A673 (cell line): ENCODE measurements at regions of chr1 and their contacts with region 1.

Region 1: GRCh38 chr1:94926915-94927404 is at the start of gene CNN3:
- DNase-seq: peak; percentile 96
- H3K4me3 ChIP-seq: peak within 1 kb of the TSS; percentile 61
- H3K27ac ChIP-seq: peak within 1 kb of the TSS; percentile 86
- H3K4me1 ChIP-seq: peaks cover 51% of the 10 kb centered on the region
- H3K27me3 ChIP-seq: no peaks in the 10 kb centered on the region
- CTCF ChIP-seq: no peak
- total RNA-seq, gene CNN3: 233 and 260 TPM in 2 replicates

Region 2: GRCh38 chr1:94854458-94855306 is 72.3 kb before region 1 on chr1:
- CTCF ChIA-PET with region 1: interaction called, 3 read pairs
- POLR2A ChIA-PET with region 1: no interaction called
- intact Hi-C with region 1: loop called (anchors 2 kb)
- DNase-seq: peak; percentile 92
- H3K4me3 ChIP-seq: peak overlapping the region; percentile 44
- H3K27ac ChIP-seq: no peak overlapping the region
- H3K4me1 ChIP-seq: no peaks in the 10 kb centered on the region
- H3K27me3 ChIP-seq: no peaks in the 10 kb centered on the region
- CTCF ChIP-seq: peak; percentile 97

Region 3: DNA sequence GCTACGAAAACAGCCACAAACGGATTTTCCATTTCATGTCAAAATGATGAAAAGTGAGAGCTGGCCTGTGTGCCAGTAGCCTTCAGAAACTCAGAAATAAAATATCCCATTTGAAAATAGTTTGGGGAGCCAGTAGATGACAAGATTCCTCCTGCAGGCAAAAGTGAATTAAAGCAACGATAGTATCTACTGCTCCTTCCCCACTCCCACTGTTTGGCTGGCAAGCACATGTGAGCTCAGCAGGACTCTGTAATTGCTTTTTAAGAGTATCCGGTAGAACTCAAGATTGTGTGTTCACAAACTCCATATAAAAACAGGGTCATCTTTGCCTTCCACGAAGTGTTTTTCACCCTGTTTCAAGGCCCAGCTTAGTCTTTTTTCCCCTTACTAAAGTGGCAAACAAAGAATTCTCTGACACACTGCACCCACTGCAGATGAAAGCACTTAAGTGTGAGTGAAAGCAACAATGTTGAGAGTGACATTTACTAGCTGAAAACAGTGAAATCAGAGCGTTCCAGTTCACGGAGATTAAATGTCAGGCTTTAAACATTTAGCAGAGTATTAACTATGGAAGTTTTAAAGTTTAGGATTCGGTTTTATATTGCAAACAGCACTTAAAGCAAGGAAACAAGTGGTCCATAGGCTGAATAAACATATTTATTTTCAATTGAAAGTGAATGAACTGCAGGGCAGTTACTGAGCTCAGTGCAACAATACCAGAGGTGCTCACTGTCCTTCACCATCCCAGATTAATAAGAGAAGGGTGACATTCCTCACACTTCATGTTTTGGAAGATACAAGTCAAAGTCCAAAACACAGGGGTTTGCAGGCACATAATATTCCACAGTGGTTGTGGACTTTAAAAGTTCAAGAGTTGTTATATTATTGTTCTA is 75.8 kb after region 1 on chr1:
- CTCF ChIA-PET with region 1: no interaction called
- POLR2A ChIA-PET with region 1: no interaction called
- intact Hi-C with region 1: loop called (anchors 5 kb)
- DNase-seq: peak; percentile 94
- H3K4me3 ChIP-seq: peak overlapping the region; percentile 1
- H3K27ac ChIP-seq: peak overlapping the region; percentile 82
- H3K4me1 ChIP-seq: peaks cover 59% of the 10 kb centered on the region
- H3K27me3 ChIP-seq: no peaks in the 10 kb centered on the region
- CTCF ChIP-seq: no peak

Region 4: GRCh38 chr1:95023399-95024043 is 96.6 kb after region 1 on chr1:
- CTCF ChIA-PET with region 1: no interaction called
- POLR2A ChIA-PET with region 1: no interaction called
- intact Hi-C with region 1: loop called (anchors 5 kb)
- DNase-seq: peak; percentile 77
- H3K4me3 ChIP-seq: no peak overlapping the region
- H3K27ac ChIP-seq: peak overlapping the region; percentile 20
- H3K4me1 ChIP-seq: peaks cover 26% of the 10 kb centered on the region
- H3K27me3 ChIP-seq: no peaks in the 10 kb centered on the region
- CTCF ChIP-seq: no peak